ENCODE measurements at regions of chr18 and their contacts with region 1.

Region 1: DNA sequence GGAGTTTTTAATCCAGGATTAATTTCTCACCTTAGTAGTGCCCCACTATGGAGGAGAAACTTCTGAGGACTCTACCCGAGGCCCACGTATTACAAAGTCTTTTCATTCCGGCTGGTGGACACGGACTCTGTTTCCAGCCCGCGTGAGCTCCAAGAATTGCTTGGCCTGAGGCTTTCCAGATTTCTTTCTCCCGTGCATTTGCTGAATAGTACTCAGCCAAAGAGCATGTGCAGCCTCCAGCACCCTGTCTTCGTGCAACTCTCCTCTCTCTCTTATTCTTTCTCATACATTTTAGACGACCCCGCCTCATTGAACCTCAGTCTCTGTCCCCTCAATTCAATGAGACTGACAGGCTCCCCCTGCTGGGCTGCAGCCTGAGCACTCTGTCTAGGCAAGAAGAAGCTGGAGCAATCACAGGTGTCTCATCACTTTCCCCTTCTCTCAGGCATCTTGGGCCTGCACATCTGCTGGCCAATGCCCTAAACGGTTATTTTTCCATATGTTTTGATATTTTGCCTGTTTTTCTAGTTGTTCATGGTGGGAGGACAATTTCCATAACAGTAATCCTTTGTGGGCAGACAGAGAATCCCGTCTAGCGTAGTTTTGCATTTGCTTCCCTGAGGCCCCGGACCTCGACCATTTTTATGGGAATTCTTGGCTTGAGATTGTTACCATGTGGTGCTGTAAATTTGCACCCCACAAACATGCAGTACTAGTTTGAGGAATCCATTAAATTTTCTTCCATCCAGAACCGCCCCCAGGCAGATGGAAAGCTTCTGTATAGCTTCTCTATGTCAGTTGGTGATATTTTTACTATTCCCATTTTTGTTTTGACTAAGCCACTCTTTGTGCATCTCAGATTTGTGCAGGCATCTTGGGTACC is 50.1 kb upstream of the LPIN2 start:
- DNase-seq: no peak
- H3K4me3 ChIP-seq: no peak overlapping the region
- CTCF ChIP-seq: peak; percentile 67

Region 2: DNA sequence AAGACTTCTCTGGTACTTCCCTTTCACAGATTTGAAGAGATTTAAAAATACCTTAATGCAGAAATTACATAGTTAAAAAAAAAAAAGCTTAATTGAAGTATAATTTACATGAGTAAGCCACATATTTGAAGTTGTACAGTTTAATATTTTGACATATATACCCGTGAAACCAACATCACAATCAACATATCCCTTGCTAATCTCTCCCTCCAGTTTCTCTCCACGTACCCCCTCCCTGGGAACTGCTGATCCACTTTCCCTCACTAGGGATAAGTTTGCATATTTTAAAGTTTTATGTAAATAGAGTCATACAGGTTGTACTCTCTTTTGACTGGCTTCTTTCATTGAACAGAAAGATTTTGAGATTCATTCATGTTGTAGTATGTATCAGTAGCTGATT is 193.8 kb before region 1 on chr18:
- CTCF ChIA-PET with region 1: no interaction called
- POLR2A ChIA-PET with region 1: no interaction called
- DNase-seq: no peak
- H3K4me3 ChIP-seq: no peak overlapping the region
- CTCF ChIP-seq: no peak

Region 3: DNA sequence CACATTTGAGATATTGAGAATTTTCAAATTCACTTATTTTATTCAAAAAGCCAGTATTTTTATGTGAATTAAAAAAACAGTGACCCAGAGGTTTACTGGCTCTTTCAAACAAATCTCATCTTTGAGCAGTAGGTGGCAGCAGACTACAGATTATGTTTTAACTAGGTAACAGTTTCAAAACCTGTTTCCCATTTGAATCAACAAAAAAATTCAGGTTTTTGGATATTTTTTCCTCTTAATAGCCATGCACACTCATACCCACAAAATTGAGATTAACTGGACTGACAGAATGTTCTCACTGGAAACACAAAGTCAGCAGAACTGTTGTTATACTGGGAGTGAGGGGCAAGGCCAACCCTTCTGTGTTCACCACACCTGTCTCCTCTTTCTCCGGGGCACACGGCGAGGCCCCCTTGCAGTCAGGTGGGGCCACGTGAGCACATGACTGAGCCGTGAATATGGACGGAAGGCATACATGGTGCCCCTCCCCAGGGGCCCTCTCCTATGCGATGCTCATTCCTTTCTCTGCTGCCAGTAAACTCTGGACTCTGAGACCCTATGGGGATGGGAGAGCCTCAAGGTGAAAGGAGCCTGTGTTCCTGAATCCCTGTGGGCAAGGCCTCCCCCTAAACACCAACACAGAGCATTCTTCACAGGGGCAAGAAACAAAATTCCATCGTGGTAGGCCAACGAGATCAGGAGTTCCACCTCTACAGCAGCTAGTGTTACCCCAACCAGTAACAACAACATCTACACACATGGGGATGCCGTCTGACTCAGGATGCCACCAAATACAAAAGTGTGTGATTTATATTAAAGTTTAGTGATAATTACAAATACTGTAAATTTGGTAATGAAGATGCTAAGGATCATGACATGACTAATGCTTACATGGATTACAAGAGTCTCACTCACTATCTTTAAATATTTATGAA is 130.5 kb before region 1 on chr18:
- CTCF ChIA-PET with region 1: interaction called, 41 read pairs
- POLR2A ChIA-PET with region 1: no interaction called
- DNase-seq: no peak
- H3K4me3 ChIP-seq: no peak overlapping the region
- CTCF ChIP-seq: peak; percentile 46

Region 4: GRCh38 chr18:2948038-2948437 is 115.0 kb before region 1 on chr18:
- CTCF ChIA-PET with region 1: interaction called, 27 read pairs
- POLR2A ChIA-PET with region 1: no interaction called
- DNase-seq: peak; percentile 16
- H3K4me3 ChIP-seq: no peak overlapping the region
- CTCF ChIP-seq: peak; percentile 16

Region 5: DNA sequence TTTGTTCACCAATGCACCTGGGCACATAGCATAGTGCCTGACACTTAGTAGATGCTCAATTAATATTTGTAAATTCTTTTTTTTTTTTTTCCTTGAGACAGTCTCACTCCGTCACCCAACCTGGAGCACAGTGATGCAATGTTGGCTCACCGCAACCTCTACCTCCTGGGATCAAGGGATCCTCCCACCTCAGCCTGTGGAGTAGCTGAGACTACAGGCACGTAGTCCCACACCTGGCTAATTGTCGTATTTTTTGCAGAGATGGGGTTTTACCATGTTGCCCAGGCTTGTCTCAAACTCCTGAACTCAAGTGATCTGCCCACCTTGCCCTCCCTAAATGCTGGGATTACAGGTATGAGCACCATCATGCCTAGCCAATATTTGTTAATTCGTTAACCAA is 26.9 kb before region 1 on chr18:
- CTCF ChIA-PET with region 1: interaction called, 10 read pairs
- POLR2A ChIA-PET with region 1: no interaction called
- DNase-seq: no peak
- H3K4me3 ChIP-seq: no peak overlapping the region
- CTCF ChIP-seq: no peak

Region 6: GRCh38 chr18:3044894-3045698 is 17.9 kb before region 1 on chr18:
- CTCF ChIA-PET with region 1: interaction called, 13 read pairs
- POLR2A ChIA-PET with region 1: no interaction called
- DNase-seq: no peak
- H3K4me3 ChIP-seq: no peak overlapping the region
- CTCF ChIP-seq: no peak

Region 7: DNA sequence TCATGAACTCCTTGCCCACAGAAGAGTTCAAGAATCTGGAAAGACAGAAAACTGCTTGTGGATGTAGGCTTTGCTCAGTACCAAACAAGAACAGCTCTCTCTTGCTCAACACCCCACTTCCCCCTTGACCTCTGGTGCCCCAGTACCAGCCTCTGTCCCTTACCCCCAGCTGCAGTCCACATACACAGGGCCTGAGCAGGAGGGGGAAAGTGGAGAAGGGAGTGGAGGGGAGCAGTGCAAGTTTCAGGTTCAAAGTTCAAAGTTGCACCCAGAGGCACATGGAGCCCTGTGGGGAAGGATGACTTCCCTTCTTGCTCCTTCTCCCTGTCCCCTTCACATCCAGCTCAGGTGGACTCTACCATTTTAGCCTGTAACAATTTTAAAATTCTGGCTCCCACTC is 11.0 kb after region 1 on chr18:
- CTCF ChIA-PET with region 1: interaction called, 113 read pairs
- POLR2A ChIA-PET with region 1: no interaction called
- DNase-seq: no peak
- H3K4me3 ChIP-seq: no peak overlapping the region
- CTCF ChIP-seq: no peak

Region 8: DNA sequence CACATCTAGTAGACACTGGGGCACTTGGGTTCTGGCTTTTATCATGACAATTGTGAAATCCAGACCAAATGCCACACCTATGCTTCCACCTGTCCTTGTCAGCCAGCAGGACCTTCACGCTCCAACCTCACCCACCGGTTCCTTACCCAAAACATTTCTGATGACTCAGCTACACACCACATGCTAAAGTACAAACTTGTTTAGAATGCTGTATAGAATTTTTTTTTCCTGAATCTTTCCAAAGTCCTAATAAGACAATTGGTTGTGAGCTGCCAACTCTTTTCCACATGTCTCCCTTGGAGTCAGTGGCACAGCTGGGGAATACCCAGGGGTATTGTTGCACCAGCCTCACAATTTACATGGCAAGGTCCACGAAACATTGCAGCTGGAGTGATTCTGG is 25.4 kb after region 1 on chr18:
- CTCF ChIA-PET with region 1: interaction called, 10 read pairs
- POLR2A ChIA-PET with region 1: no interaction called
- DNase-seq: no peak
- H3K4me3 ChIP-seq: no peak overlapping the region
- CTCF ChIP-seq: no peak